ENCODE measurements at regions of chr9 and their contacts with region 1.

Region 1: GRCh38 chr9:125763394-125763801 is 16.2 kb downstream of the PBX3 start:
- DNase-seq: peak in 1 of 2 experiments; percentile 20
- H3K4me3 ChIP-seq: no peak overlapping the region
- H3K27ac ChIP-seq: no peak overlapping the region
- H3K4me1 ChIP-seq: no peaks in the 10 kb centered on the region
- H3K27me3 ChIP-seq: no peaks in the 10 kb centered on the region
- CTCF ChIP-seq: no peak

Region 2: DNA sequence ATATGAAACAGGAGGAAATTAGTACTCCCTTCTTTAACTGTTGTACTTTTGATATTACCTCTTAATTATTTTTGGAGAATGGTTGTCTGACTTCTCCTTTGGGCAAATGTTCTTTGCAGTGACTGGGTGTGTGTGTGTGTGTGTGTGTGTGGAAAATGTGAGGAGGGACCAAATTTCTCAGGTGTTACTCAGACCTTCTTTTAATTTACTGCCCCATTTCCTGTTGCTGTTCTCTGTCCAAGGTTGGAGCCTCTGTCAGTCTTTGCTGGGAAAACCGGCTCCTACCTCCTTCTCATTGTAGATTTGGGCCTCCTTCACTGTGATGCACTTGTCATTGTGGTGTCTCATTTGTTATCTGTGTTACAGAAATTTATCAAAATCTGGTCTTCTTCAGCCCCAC is 52.2 kb after region 1 on chr9:
- CTCF ChIA-PET with region 1: no interaction called
- POLR2A ChIA-PET with region 1: no interaction called
- intact Hi-C with region 1: no loop called
- DNase-seq: peak; percentile 44 to 49
- H3K4me3 ChIP-seq: no peak overlapping the region
- H3K27ac ChIP-seq: no peak overlapping the region
- H3K4me1 ChIP-seq: 0 out of 2 replicates have a peak, but pooled peaks cover 3% of the 10 kb centered on the region
- H3K27me3 ChIP-seq: no peaks in the 10 kb centered on the region
- CTCF ChIP-seq: no peak

Region 3: DNA sequence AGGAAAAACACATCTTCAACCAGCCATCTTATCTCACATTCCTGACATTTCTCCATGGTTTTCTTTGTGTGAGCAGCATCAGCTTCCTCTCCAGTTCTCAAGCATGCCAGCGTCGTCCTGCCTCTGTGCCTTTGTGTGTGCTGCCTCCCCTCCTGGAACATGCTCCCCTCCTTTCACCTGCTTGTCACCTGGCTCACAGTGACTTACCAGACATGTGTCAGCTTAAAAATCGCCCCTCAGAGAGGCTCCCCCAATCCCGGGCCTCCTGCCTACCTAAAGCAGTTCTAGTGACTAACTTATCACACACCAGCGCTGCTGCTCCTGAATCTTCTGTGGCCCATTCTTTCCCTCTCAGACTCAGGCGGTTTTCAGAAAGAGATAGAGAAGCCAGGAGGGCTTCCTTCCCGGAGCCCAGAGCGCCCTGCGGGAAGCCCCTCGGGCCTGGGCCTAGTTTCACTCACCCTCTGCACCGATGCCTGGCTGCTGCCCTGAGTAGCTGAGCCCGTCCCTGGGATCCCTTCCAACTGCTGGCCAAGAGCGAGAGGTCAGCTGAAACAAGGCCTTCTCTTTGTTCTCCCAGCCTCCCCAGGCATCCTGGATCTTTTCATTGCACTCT is 512.1 kb after region 1 on chr9:
- CTCF ChIA-PET with region 1: no interaction called
- POLR2A ChIA-PET with region 1: interaction called, 10 read pairs
- intact Hi-C with region 1: no loop called
- DNase-seq: no peak
- H3K4me3 ChIP-seq: no peak overlapping the region
- H3K27ac ChIP-seq: no peak overlapping the region
- H3K4me1 ChIP-seq: no peaks in the 10 kb centered on the region
- H3K27me3 ChIP-seq: peaks cover 20% of the 10 kb centered on the region
- CTCF ChIP-seq: no peak

Measured in PC-9 (cell line).